Right ventricle myocardium inferior (tissue), 1 donor: ENCODE measurements at regions of chr11 and their contacts with region 1.

Region 1: GRCh38 chr11:104609311-104610085 is 288.8 kb downstream of the CASP12 start:
- DNase-seq: no peak
- ATAC-seq: peak; percentile 77

Region 2: DNA sequence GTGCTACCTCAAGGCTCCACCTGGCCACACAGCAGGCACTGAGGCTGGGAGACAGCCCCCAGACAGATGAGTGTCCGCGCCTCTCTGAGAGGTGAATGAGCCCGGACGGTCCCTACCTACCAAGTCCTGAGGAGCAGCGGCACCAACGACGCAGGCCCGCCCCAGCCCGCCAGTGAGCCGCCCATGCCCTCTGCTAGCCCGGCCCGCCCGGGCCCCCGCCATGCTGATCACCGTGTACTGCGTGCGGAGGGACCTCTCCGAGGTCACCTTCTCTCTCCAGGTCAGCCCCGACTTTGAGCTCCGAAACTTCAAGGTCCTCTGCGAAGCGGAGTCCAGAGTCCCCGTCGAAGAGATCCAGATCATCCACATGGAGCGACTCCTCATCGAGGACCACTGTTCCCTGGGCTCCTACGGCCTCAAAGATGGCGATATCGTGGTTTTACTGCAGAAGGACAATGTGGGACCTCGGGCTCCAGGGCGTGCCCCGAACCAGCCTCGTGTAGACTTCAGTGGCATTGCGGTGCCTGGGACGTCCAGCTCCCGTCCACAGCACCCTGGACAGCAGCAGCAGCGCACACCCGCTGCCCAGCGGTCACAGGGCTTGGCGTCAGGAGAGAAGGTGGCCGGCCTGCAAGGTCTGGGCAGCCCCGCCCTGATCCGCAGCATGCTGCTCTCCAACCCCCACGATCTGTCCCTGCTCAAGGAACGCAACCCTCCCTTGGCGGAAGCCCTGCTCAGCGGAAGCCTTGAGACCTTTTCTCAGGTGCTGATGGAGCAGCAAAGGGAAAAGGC is 572.7 kb before region 1 on chr11 and contains the start of gene DDI1:
- intact Hi-C with region 1: no loop called
- DNase-seq: no peak
- ATAC-seq: peak; percentile 24
- total RNA-seq, gene DDI1: not detected

Region 3: GRCh38 chr11:104581246-104581980 is 28.1 kb before region 1 on chr11:
- intact Hi-C with region 1: no loop called
- DNase-seq: no peak
- ATAC-seq: no peak

Region 4: DNA sequence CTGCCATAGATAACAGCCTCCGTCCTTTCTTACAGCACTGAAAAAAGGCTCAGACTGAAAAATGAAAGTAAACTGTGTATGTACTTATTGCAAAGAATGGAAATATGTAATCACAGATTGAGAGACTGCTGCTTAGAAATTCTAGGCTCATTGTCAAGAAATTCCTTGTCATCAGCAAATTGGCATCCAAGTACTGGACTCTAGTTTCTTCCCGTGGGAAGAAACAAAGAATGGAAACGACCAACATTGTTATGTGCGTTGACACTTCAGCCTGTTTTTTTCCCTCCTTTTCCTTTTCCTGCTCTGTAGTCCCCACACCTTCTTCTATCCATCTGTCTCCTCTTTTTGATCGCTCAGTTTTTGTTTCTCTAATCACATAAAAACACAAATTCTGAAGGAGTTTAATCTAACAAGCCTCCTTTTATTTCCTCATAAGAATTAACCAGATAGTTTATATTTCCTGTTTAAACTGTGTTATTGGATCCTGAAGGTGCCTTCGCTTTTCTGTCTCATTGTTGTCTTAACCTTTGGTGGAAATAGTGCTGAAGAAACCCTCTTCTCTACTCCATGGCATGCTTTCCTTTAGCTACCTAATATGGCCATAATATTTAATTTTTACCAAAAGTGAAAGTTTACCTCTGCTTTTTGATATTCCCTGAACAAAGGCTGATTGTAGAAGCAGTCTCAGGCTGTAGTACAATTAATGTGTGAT is 308.8 kb after region 1 on chr11:
- intact Hi-C with region 1: loop called (anchors 10 kb)
- DNase-seq: no peak
- ATAC-seq: no peak